ENCODE measurements at regions of chr6 and their contacts with region 1.

Region 1: GRCh38 chr6:3987053-3987452 is 91.9 kb downstream of the FAM217A start:
- DNase-seq: no peak
- ATAC-seq: no peak

Region 2: DNA sequence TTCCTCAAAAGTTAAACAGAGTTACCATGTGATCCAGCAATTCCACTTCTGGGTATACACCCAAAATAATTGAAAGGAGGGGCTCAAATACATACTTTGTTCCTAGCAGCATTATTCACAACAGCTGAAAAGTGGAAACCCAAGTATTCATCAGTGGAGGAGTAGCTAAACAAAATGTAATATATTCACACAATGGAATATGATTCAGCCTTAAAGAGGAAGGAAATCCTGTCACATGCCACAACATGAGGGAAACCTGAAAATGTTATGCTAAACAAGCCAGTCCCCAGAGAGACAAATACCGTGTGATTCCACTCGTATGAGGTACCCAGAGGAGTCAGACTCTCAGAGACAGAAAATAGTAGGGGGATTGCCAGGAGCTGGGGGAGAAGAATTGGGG is 280.0 kb before region 1 on chr6:
- intact Hi-C with region 1: no loop called
- DNase-seq: no peak
- ATAC-seq: no peak

Region 3: GRCh38 chr6:3742426-3743344 is 244.4 kb before region 1 on chr6:
- intact Hi-C with region 1: loop called (anchors 5 kb)
- DNase-seq: peak; percentile 94
- ATAC-seq: peak; percentile 88

Measured in sciatic nerve (tissue), 2 donors.